CD14-positive monocyte (primary cell): ENCODE measurements at regions of chr17 and their contacts with region 1.

Region 1: GRCh38 chr17:77247048-77247541 is 106.3 kb downstream of the SEC14L1 start:
- DNase-seq: peak; percentile 62 to 78 (median 75)
- H3K4me3 ChIP-seq: peak overlapping the region; percentile 11 to 71 (median 25)
- H3K4me3 Mint-ChIP-seq: peak overlapping the region; percentile 24 to 72
- H3K27ac ChIP-seq: no peak overlapping the region
- H3K27ac Mint-ChIP-seq: no peak overlapping the region
- H3K4me1 ChIP-seq: peaks cover 9 to 13% of the 10 kb centered on the region in 2 donors
- H3K4me1 Mint-ChIP-seq: peaks cover 9% of the 10 kb centered on the region
- H3K27me3 ChIP-seq: peaks cover 0 to 4% of the 10 kb centered on the region in 2 donors
- H3K27me3 Mint-ChIP-seq: peaks cover 18 to 27% (median 20%) of the 10 kb centered on the region in 3 donors
- CTCF ChIP-seq: peak; percentile 98

Region 2: GRCh38 chr17:77011173-77012011 is 235.7 kb before region 1 on chr17:
- intact Hi-C with region 1: loop called in 1 of 2 experiments (anchors 5 kb)
- DNase-seq: peak in 2 of 3 donors; percentile 3 to 4
- H3K4me3 ChIP-seq: no peak overlapping the region
- H3K4me3 Mint-ChIP-seq: no peak overlapping the region
- H3K27ac ChIP-seq: no peak overlapping the region
- H3K27ac Mint-ChIP-seq: peak overlapping the region in 1 of 7 donors; percentile 47
- H3K4me1 ChIP-seq: no peaks in the 10 kb centered on the region
- H3K4me1 Mint-ChIP-seq: no peaks in the 10 kb centered on the region
- H3K27me3 ChIP-seq: no peaks in the 10 kb centered on the region
- H3K27me3 Mint-ChIP-seq: peaks cover 6 to 15% (median 8%) of the 10 kb centered on the region in 3 donors
- CTCF ChIP-seq: peak; percentile 72

Region 3: DNA sequence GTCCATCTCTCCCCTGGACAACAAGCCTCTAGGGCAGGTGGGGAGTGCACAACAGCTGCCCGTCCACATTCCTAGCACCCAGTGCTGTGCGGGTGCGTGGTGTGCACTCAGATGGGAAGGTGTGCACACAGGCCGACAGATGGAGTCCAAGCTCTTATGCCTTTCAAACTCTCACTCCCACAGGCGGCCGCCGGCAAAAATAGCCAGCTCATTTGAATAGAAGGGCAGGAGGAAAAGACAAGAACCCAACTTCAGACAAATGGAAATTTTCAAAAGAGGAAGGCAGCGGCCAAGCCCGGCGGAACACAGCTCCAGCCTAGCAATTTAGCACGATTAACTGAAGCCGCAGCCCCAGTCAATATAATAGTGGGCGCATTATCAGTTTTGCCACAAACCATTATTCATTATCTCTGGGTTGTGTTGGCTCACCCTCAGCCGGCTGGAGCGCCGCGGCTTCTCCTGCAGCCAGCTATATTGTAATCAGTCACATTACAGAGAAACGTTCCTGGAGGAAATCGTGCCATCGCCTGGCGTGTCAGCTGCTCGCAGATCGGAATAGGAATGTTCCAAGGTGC is 210.2 kb before region 1 on chr17:
- intact Hi-C with region 1: no loop called
- DNase-seq: no peak
- H3K4me3 ChIP-seq: no peak overlapping the region
- H3K4me3 Mint-ChIP-seq: no peak overlapping the region
- H3K27ac ChIP-seq: no peak overlapping the region
- H3K27ac Mint-ChIP-seq: no peak overlapping the region
- H3K4me1 ChIP-seq: no peaks in the 10 kb centered on the region
- H3K4me1 Mint-ChIP-seq: peaks cover 2% of the 10 kb centered on the region
- H3K27me3 ChIP-seq: peaks cover 0 to 14% of the 10 kb centered on the region in 2 donors
- H3K27me3 Mint-ChIP-seq: peaks cover 14 to 25% (median 19%) of the 10 kb centered on the region in 3 donors
- CTCF ChIP-seq: no peak

Region 4: DNA sequence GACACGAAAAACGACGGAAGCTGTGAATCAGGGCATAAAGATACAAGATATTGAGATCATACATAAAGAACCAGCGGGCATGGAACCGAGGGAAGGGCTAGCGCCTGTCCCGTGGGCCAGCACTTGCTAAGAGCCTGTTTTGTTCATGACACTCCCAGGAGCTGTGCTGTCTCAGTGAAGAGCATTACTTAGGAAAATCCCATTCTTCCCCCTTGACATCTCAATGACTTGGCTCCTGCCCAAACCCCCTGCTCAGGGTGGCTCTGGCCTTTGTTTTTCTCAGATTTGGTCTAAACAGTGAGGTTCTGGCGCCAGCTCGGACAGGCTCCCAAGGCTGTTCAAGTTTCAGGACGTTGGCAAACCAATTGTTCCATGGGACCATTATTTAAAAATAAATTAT is 185.4 kb before region 1 on chr17:
- intact Hi-C with region 1: no loop called
- DNase-seq: no peak
- H3K4me3 ChIP-seq: no peak overlapping the region
- H3K4me3 Mint-ChIP-seq: no peak overlapping the region
- H3K27ac ChIP-seq: no peak overlapping the region
- H3K27ac Mint-ChIP-seq: no peak overlapping the region
- H3K4me1 ChIP-seq: no peaks in the 10 kb centered on the region
- H3K4me1 Mint-ChIP-seq: no peaks in the 10 kb centered on the region
- H3K27me3 ChIP-seq: no peaks in the 10 kb centered on the region
- H3K27me3 Mint-ChIP-seq: peaks cover 5 to 11% (median 9%) of the 10 kb centered on the region in 3 donors
- CTCF ChIP-seq: no peak

Region 5: DNA sequence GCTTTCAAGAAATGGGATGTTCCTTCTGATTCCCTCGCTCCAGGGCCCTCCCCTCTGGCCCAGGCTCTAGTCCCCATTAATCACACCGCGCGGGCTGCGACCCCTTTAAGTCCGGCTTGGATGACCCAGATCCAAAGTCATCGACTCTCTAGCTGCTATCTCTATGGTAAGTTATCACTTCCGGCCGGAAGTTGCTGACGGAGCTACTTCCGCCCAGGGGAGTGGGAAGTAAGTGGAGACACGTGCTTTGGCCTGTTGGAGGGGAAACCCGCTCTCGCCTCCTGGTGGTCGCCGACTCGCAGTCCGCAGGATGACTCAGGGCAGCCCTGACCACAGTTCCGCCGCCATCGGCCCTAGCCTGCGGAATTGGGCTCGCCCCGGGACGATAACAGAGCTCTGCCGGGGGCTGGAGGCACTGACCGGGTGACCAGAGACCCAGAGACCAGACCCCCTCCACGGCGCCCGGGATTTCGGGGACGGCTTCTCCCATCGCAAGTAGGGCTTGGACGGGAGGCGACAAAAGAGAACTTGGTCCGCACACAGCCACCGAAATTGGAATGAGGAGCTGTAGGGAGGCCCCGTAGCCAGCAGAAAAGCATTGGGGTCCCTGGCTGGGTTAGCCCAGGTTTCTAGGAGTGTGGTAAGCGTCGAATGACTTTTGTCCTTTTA is 158.5 kb before region 1 on chr17:
- intact Hi-C with region 1: loop called (anchors 1 to 2 kb)
- DNase-seq: peak; percentile 96 to 98 (median 98)
- H3K4me3 ChIP-seq: peak overlapping the region; percentile 85 to 96 (median 93)
- H3K4me3 Mint-ChIP-seq: peak overlapping the region; percentile 91 to 97
- H3K27ac ChIP-seq: peak overlapping the region; percentile 94 to 96
- H3K27ac Mint-ChIP-seq: peak overlapping the region; percentile 93 to 99 (median 97)
- H3K4me1 ChIP-seq: peaks cover 25 to 29% of the 10 kb centered on the region in 2 donors
- H3K4me1 Mint-ChIP-seq: peaks cover 33% of the 10 kb centered on the region
- H3K27me3 ChIP-seq: peaks cover 0 to 10% of the 10 kb centered on the region in 2 donors
- H3K27me3 Mint-ChIP-seq: peaks cover 11 to 23% (median 23%) of the 10 kb centered on the region in 3 donors
- CTCF ChIP-seq: peak; percentile 75

Region 6: GRCh38 chr17:77208217-77208808 is 38.8 kb before region 1 on chr17:
- intact Hi-C with region 1: no loop called
- DNase-seq: no peak
- H3K4me3 ChIP-seq: no peak overlapping the region
- H3K4me3 Mint-ChIP-seq: no peak overlapping the region
- H3K27ac ChIP-seq: no peak overlapping the region
- H3K27ac Mint-ChIP-seq: no peak overlapping the region
- H3K4me1 ChIP-seq: peaks cover 24 to 35% of the 10 kb centered on the region in 2 donors
- H3K4me1 Mint-ChIP-seq: peaks cover 33% of the 10 kb centered on the region
- H3K27me3 ChIP-seq: no peaks in the 10 kb centered on the region
- H3K27me3 Mint-ChIP-seq: peaks cover 0 to 2% (median 0%) of the 10 kb centered on the region in 3 donors
- CTCF ChIP-seq: no peak